ENCODE measurements at regions of chr4 and their contacts with region 1.

Region 1: GRCh38 chr4:146916479-146917076 is 29.1 kb downstream of the TTC29 start:
- DNase-seq: peak; percentile 59
- H3K4me3 Mint-ChIP-seq: no peak overlapping the region
- H3K27ac Mint-ChIP-seq: no peak overlapping the region
- H3K4me1 Mint-ChIP-seq: peaks cover 6% of the 10 kb centered on the region
- H3K27me3 Mint-ChIP-seq: peaks cover 58% of the 10 kb centered on the region
- CTCF ChIP-seq: peak; percentile 89

Region 2: DNA sequence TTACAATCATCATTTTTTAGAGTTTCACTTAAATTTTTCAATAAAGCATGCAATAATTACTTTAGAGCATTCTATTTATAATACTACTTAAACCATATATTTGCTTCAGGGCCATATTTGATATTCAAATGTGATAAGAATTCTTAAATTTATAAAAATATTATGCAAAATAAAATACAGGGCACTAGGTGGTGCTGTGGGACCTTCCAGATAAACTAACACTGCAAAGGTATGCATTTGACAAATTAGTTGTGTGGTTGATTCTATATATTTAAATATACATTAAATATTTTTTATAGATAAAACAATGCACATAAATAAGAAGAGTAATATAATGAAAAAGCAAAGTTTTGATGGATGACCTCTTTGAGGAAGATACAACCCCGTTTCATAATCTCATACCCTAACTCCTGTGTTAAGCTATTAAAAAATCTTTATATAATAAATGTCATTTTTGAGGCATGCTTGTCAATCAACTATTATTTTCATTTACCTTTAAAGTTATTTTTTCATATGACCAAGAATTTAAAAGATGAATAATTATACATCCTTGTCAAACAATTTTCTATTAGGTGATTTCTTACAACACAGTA is 573.9 kb before region 1 on chr4:
- CTCF ChIA-PET with region 1: interaction called, 10 read pairs
- POLR2A ChIA-PET with region 1: no interaction called
- intact Hi-C with region 1: loop called (anchors 1 kb)
- DNase-seq: peak; percentile 50
- H3K4me3 Mint-ChIP-seq: no peak overlapping the region
- H3K27ac Mint-ChIP-seq: no peak overlapping the region
- H3K4me1 Mint-ChIP-seq: no peaks in the 10 kb centered on the region
- H3K27me3 Mint-ChIP-seq: no peaks in the 10 kb centered on the region
- CTCF ChIP-seq: peak; percentile 61

Region 3: DNA sequence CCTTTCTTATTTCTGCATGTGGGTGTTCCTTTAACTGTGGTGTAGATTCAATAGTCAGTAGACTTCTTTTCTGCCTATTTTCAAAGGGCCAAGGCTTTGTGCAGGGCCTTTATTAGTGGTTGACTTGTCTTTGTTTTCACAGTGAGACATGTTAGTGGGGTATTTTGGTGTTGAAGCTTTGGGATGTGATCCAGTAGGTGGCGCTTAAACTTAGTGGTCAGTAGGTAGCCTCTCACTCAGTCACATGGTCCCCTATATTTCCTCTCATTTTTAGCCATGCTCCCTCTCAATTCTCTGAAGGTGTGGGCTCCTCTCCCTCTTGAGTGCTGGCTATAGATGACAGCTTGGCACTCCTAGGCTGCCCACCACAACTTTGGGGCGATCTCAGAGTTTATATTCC is 371.5 kb before region 1 on chr4:
- CTCF ChIA-PET with region 1: no interaction called
- POLR2A ChIA-PET with region 1: no interaction called
- intact Hi-C with region 1: loop called (anchors 1 kb)
- DNase-seq: peak; percentile 62
- H3K4me3 Mint-ChIP-seq: no peak overlapping the region
- H3K27ac Mint-ChIP-seq: no peak overlapping the region
- H3K4me1 Mint-ChIP-seq: no peaks in the 10 kb centered on the region
- H3K27me3 Mint-ChIP-seq: peaks cover 13% of the 10 kb centered on the region
- CTCF ChIP-seq: peak; percentile 28

Region 4: GRCh38 chr4:146585761-146586333 is 330.7 kb before region 1 on chr4:
- CTCF ChIA-PET with region 1: interaction called, 3 read pairs
- POLR2A ChIA-PET with region 1: no interaction called
- intact Hi-C with region 1: loop called (anchors 1 kb)
- DNase-seq: peak; percentile 80
- H3K4me3 Mint-ChIP-seq: no peak overlapping the region
- H3K27ac Mint-ChIP-seq: peak overlapping the region; percentile 78
- H3K4me1 Mint-ChIP-seq: peaks cover 15% of the 10 kb centered on the region
- H3K27me3 Mint-ChIP-seq: no peaks in the 10 kb centered on the region
- CTCF ChIP-seq: no peak